ENCODE measurements at regions of chr6 and their contacts with region 1.

Region 1: GRCh38 chr6:2988426-2989331 is 11.0 kb upstream of the NQO2 start:
- DNase-seq: peak; percentile 93
- ATAC-seq: peak; percentile 88 to 90

Region 2: DNA sequence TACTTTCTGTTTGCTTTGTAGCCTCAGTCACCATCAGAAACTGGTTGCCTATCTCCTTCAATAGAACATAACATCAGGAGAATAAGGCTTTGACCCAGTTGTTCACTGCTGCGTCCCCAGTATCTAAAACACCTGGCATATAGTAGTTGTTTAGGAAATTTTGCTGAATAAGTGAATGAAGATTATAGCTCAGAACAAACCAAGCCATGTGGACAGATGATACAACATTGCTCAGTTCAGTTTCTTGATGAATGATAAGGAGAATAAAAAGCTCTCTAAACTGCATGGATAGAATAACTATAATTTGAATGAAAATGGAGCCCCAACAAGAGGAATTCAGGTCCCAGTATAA is 141.8 kb before region 1 on chr6:
- intact Hi-C with region 1: loop called in 1 of 2 experiments (anchors 2 kb)
- DNase-seq: no peak
- ATAC-seq: no peak

Region 3: GRCh38 chr6:2931970-2932748 is 56.5 kb before region 1 on chr6:
- intact Hi-C with region 1: loop called in 1 of 2 experiments (anchors 10 kb)
- DNase-seq: peak; percentile 80
- ATAC-seq: peak; percentile 94

Region 4: DNA sequence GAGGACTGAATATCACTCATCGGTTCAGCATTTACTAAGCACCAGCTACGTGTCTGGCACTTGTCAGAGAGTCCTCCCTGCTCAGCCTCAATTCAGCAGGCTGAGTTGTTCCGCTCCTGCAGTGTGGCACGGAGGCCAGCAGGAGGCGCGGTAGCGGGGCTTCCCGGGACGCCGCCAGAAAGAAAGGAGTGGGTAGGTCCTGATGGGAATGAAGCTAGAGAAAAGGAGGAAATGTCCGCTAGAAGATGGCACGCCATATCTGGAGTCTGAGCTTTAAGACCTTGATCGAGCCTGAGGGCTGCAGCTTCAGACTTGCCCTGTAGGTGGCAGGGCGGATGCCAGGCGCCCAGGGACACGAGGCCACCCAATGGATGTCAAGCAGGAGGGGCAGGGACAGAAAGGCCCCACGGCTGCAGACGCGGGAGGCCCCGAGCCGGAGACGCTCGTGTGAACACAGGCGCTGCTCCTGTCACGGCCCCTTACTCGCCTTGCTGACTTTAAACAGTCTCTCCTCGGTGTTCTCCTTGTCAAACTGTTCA is 36.1 kb before region 1 on chr6:
- intact Hi-C with region 1: loop called in 1 of 2 experiments (anchors 2 kb)
- DNase-seq: peak; percentile 79
- ATAC-seq: peak; percentile 74 to 81

Region 5: GRCh38 chr6:2971420-2972218 is 17.1 kb before region 1 on chr6 and contains the start of gene SERPINB6:
- intact Hi-C with region 1: loop called in 1 of 2 experiments (anchors 2 kb)
- DNase-seq: peak; percentile 87
- ATAC-seq: peak; percentile 90 to 92
- total RNA-seq, gene SERPINB6: 218 to 225 TPM

Region 6: DNA sequence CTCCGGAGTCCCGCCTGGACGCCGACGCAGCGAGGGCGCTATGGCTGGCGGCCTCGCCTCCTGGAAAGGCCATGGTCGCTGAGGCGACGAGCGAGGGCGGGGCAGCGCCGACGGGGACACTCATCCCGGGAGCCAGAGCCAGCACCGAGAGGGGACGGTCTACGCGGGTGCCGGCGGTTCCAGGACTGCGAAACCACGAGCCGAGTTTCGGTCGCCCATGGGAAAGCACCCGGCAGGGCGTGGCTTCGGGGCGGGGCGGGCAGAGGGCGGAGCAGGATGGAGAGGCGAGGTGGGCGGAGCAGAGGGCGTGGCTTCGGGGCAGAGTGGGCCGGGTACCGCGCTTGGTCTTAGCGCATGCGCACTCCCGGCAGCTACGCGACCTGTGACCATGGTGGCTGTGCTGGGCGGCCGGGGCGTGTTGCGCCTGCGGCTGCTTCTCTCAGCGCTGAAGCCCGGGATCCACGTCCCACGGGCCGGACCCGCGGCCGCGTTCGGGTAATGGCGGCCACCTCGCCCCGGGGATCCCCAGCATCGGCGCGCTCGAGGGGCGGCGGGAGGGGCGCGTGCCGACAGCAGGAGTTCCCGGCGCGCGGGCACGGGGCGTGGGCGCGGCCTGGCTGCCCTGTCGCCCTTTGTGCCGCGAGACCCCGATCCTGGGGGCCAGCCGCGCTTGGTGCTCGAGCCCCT is 129.8 kb after region 1 on chr6 and contains the start of gene BPHL:
- intact Hi-C with region 1: no loop called
- DNase-seq: peak; percentile 98
- ATAC-seq: peak; percentile 99
- total RNA-seq, gene BPHL: 12.4 to 13.6 TPM